Activated T-helper 1 cell treated with anti-CD3 and anti-CD28 coated beads, Interleukin-12 subunit alpha, Interleukin-12 subunit beta, Interleukin-2, Interleukin-4 antibody, amounts not matched to agents 30 ng/mL and 10 ng/mL and 1 ng/mL, durations not matched to agents 14 hours and 24 hours and 36 hours (primary cell): ENCODE measurements at regions of chr19 and their contacts with region 1.

Region 1: GRCh38 chr19:5001615-5002014 is 32.7 kb downstream of the KDM4B start:
- DNase-seq: no peak
- H3K4me3 Mint-ChIP-seq: no peak overlapping the region
- H3K27ac Mint-ChIP-seq: no peak overlapping the region
- H3K4me1 Mint-ChIP-seq: no peaks in the 10 kb centered on the region
- H3K27me3 Mint-ChIP-seq: no peaks in the 10 kb centered on the region

Region 2: GRCh38 chr19:4988770-4989251 is 12.8 kb before region 1 on chr19:
- intact Hi-C with region 1: no loop called
- DNase-seq: no peak
- H3K4me3 Mint-ChIP-seq: no peak overlapping the region
- H3K27ac Mint-ChIP-seq: no peak overlapping the region
- H3K4me1 Mint-ChIP-seq: peaks cover 6% of the 10 kb centered on the region
- H3K27me3 Mint-ChIP-seq: peaks cover 2% of the 10 kb centered on the region

Region 3: DNA sequence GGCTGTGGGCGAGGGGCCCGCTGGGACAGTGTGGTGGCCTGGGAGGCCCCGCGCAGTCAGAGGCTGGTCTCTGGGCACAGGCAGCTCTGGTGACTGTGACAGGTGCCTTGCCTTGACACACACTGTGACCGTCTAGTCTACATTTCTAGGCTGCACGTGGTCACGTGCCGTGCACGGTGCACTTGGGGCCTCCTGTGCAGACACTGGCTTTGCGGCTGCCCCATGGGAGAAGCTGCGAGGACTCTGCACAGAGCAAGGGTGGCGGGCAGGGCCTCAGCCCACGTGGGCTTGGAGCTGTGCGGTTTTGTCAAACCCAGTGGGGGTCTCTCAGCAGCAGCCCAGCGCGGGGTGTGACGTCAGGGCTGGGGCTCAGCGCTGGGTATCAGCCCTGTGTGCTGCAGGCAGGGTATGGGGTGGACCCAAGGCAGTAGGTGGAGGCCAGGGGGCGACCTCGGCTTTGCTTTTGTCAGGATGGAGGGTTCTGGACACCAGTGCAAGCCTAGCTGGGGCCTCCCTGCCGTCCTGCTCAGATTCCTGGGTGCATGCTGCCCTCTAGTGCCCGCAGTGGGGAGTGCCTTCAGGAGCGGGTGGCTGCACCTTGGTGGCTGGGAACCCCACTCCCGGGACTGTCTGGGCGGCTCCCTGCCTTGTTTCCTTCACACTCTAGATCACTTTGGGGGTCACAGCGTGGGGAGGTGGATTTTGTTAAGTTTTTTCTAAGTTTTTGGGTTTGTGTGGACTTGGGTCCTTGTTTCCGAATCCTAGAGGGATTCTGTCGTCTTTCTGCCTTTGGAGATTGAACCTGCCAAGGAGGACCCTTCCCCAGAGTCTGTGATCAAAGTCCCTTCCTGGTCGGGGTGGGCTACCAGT is 29.9 kb after region 1 on chr19:
- intact Hi-C with region 1: loop called (anchors 1 kb)
- DNase-seq: peak; percentile 69
- H3K4me3 Mint-ChIP-seq: no peak overlapping the region
- H3K27ac Mint-ChIP-seq: no peak overlapping the region
- H3K4me1 Mint-ChIP-seq: no peaks in the 10 kb centered on the region
- H3K27me3 Mint-ChIP-seq: no peaks in the 10 kb centered on the region